Activated B cell treated with CpG ODN at 0.5 μM for 24 hours (primary cell): ENCODE measurements at regions of chr7 and their contacts with region 1.

Region 1: GRCh38 chr7:47536661-47537611 is 45.0 kb downstream of the TNS3 start:
- DNase-seq: no peak
- ATAC-seq: no peak
- H3K4me3 Mint-ChIP-seq: peak overlapping the region; percentile 67
- H3K27ac Mint-ChIP-seq: no peak overlapping the region
- H3K4me1 Mint-ChIP-seq: peaks cover 32% of the 10 kb centered on the region
- H3K27me3 Mint-ChIP-seq: peaks cover 5% of the 10 kb centered on the region
- CTCF ChIP-seq: no peak

Region 2: GRCh38 chr7:46764100-46764936 is 772.6 kb before region 1 on chr7:
- CTCF ChIA-PET with region 1: no interaction called
- POLR2A ChIA-PET with region 1: no interaction called
- intact Hi-C with region 1: no loop called
- DNase-seq: no peak
- ATAC-seq: no peak
- H3K4me3 Mint-ChIP-seq: no peak overlapping the region
- H3K27ac Mint-ChIP-seq: no peak overlapping the region
- H3K4me1 Mint-ChIP-seq: no peaks in the 10 kb centered on the region
- H3K27me3 Mint-ChIP-seq: no peaks in the 10 kb centered on the region
- CTCF ChIP-seq: no peak

Region 3: DNA sequence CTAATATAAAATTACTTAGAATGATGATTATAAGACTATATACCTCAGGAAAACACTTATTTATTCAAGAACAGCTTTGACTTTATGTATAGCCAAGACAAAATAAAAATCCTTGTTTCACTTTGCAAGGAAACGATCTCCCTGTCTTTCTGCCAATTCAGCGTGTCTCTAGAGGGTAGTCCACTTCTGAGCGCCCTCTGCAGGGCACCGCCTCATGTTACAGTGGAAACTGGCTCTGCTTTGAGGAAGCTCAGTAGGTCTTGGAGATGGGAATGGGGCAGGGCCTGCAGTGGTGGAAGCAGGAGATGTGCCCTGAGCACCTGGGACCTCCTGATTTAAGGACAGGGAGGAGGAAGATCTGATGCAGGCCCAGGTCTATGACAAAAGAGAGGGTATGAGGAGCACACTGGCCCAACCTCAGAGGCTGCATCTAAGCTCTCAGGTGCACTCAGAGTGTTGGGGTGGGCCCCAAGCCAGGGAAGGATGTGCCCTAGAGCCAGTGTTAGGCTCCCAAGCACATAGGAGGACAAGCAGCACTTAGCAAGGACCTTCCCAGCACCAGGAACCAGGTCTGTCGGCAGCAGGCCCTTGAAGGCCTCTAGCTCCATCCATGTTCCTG is 436.0 kb before region 1 on chr7:
- CTCF ChIA-PET with region 1: no interaction called
- POLR2A ChIA-PET with region 1: no interaction called
- intact Hi-C with region 1: no loop called
- DNase-seq: no peak
- ATAC-seq: no peak
- H3K4me3 Mint-ChIP-seq: no peak overlapping the region
- H3K27ac Mint-ChIP-seq: no peak overlapping the region
- H3K4me1 Mint-ChIP-seq: peaks cover 2% of the 10 kb centered on the region
- H3K27me3 Mint-ChIP-seq: no peaks in the 10 kb centered on the region
- CTCF ChIP-seq: no peak

Region 4: DNA sequence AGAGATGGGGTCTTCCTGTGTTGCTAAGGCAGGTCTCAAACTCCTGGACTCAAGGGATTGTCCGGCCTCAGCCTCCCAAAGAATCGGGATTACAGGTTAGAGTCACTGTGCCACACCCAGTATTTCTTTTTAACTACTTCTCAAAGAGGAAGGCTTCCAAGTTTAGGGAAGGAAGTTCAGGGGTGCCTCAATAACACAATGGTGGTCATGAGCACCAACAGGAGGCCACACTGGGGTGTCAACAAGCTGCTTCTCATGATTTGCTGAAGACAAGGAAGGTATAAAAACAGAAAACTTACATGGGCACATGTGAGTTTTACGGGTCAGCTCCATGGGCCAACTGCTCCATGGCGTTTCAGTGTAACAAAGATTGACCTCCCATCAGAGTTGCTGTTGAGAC is 115.5 kb before region 1 on chr7:
- CTCF ChIA-PET with region 1: no interaction called
- POLR2A ChIA-PET with region 1: interaction called, 12 read pairs
- intact Hi-C with region 1: no loop called
- DNase-seq: no peak
- ATAC-seq: no peak
- H3K4me3 Mint-ChIP-seq: no peak overlapping the region
- H3K27ac Mint-ChIP-seq: no peak overlapping the region
- H3K4me1 Mint-ChIP-seq: no peaks in the 10 kb centered on the region
- H3K27me3 Mint-ChIP-seq: no peaks in the 10 kb centered on the region
- CTCF ChIP-seq: no peak